GM10248 (cell line): ENCODE measurements at regions of chr19 and their contacts with region 1.

Region 1: GRCh38 chr19:43526884-43527859 is at the start of gene ETHE1:
- DNase-seq: peak; percentile 88
- CTCF ChIP-seq: no peak

Region 2: GRCh38 chr19:43438291-43439096 is 88.7 kb before region 1 on chr19:
- CTCF ChIA-PET with region 1: interaction called, 138 read pairs
- POLR2A ChIA-PET with region 1: no interaction called
- DNase-seq: no peak
- CTCF ChIP-seq: no peak

Region 3: DNA sequence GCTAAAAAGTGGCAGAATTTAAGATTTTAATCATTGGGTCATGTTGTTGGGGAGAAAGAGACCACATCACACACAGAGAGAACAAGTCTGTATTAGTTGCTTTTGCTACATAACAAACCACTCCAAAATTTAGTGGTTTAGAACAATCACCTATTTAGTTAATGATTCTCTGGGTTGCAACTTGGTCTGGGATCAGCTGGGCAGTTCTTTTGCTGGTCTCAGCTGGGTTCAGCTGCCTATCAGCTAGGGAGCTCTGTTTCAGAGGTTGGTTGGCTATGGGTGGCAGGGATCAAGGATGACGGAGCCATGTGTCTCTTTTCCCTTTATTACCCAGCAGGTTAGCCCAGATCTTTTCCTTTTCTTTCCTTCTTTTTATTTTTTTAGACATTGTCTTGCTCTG is 57.3 kb after region 1 on chr19:
- CTCF ChIA-PET with region 1: no interaction called
- POLR2A ChIA-PET with region 1: no interaction called
- DNase-seq: no peak
- CTCF ChIP-seq: no peak